T-cell (primary cell): ENCODE measurements at regions of chr20 and their contacts with region 1.

Region 1: DNA sequence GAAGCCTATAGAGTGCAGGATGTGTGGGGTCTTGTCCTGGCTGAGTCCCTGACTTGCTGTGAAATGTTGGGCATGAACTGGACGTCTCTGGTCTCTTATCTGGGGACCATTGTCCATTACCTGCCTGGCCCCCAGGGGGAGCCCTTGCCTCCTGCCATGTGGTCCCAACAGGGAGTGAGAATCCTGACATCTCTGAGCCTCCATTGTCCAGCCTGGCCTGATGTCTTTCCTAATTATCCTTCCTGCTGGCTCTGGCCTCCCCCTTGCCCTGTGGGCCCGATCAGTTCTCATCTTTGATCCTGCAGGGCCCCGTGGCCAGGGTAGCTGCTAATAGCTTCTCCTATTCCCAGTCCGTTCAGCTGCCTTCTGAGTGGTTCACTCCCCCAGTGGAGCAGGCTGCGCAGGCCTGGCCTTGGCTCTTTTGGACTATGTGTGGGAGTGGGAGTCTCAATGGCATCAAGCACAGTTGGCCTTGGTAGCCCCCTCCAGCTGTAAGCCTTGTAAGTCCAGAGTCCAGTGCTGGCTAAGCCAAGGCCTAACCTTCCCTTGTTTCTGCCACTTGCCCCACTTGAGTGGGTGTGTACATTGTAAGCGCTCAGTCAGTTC is 77.9 kb upstream of the RALY start:
- DNase-seq: peak in 33 of 35 experiments; percentile 2 to 69 (median 37)
- ATAC-seq: peak in 2 of 4 experiments; percentile 53 to 58
- H3K4me3 ChIP-seq: no peak overlapping the region
- H3K4me3 Mint-ChIP-seq: no peak overlapping the region
- H3K27ac ChIP-seq: no peak overlapping the region
- H3K27ac Mint-ChIP-seq: no peak overlapping the region
- H3K4me1 ChIP-seq: peaks cover 0 to 2% of the 10 kb centered on the region in 2 experiments
- H3K4me1 Mint-ChIP-seq: peaks cover 12 to 18% (median 14%) of the 10 kb centered on the region in 3 donors
- H3K27me3 ChIP-seq: peaks cover 0 to 6% of the 10 kb centered on the region in 2 experiments
- H3K27me3 Mint-ChIP-seq: peaks cover 0 to 5% of the 10 kb centered on the region in 2 donors

Region 2: DNA sequence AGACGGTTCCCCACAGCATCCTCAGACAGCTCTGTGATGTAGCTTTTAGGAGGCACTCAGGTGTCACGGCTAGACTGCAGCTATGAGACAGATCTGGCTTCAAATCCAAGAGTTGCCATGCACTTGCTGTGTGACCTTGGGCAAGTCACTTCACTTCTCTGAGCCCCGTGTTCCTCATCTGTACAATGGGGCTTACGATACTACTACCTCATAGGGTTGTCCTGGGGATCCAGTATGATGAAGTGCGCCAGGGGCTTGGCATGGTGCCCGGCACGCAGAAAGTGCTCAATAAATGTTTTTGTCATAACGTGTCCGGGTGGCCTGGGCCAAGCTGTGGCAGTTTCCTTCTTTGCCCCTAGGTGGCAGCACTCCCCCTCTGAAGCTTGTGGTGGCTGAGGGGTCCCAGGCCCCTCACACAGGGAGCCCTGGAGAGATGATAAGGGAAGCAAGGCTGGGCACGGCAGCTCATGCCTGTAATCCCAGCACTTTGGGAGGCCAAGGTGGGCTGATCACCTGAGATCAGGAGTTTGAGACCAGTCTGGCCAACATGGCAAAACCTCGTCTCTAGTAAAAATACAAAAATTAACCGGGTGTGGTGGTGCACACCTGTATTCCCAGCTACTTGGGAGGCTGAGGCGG is 123.8 kb before region 1 on chr20:
- CTCF ChIA-PET with region 1: interaction called, 4 to 10 read pairs
- POLR2A ChIA-PET with region 1: no interaction called
- DNase-seq: peak in 30 of 35 experiments; percentile 8 to 67 (median 34)
- ATAC-seq: peak in 3 of 4 experiments; percentile 60 to 69 (median 62)
- H3K4me3 ChIP-seq: no peak overlapping the region
- H3K4me3 Mint-ChIP-seq: no peak overlapping the region
- H3K27ac ChIP-seq: no peak overlapping the region
- H3K27ac Mint-ChIP-seq: no peak overlapping the region
- H3K4me1 ChIP-seq: peaks cover 2 to 13% of the 10 kb centered on the region in 2 experiments
- H3K4me1 Mint-ChIP-seq: peaks cover 6 to 14% (median 8%) of the 10 kb centered on the region in 3 donors
- H3K27me3 ChIP-seq: no peaks in the 10 kb centered on the region
- H3K27me3 Mint-ChIP-seq: no peaks in the 10 kb centered on the region

Region 3: GRCh38 chr20:33954504-33954903 is 38.7 kb after region 1 on chr20:
- CTCF ChIA-PET with region 1: interaction called in 1 of 2 experiments, 11 read pairs
- POLR2A ChIA-PET with region 1: no interaction called
- DNase-seq: no peak
- ATAC-seq: no peak
- H3K4me3 ChIP-seq: no peak overlapping the region
- H3K4me3 Mint-ChIP-seq: no peak overlapping the region
- H3K27ac ChIP-seq: no peak overlapping the region
- H3K27ac Mint-ChIP-seq: no peak overlapping the region
- H3K4me1 ChIP-seq: no peaks in the 10 kb centered on the region
- H3K4me1 Mint-ChIP-seq: no peaks in the 10 kb centered on the region
- H3K27me3 ChIP-seq: peaks cover 0 to 4% of the 10 kb centered on the region in 2 experiments
- H3K27me3 Mint-ChIP-seq: peaks cover 16 to 22% of the 10 kb centered on the region in 2 donors

Region 4: GRCh38 chr20:34111702-34112599 is 196.1 kb after region 1 on chr20 and contains the start of gene EIF2S2:
- CTCF ChIA-PET with region 1: interaction called in 1 of 2 experiments, 10 read pairs
- POLR2A ChIA-PET with region 1: no interaction called
- DNase-seq: peak; percentile 86 to 99 (median 95)
- ATAC-seq: peak; percentile 85 to 92 (median 90)
- H3K4me3 ChIP-seq: peak within 1 kb of the TSS; percentile 90 to 98
- H3K4me3 Mint-ChIP-seq: peak within 1 kb of the TSS; percentile 95 to 97 (median 96)
- H3K27ac ChIP-seq: peak within 1 kb of the TSS; percentile 87
- H3K27ac Mint-ChIP-seq: peak within 1 kb of the TSS; percentile 96 to 99
- H3K4me1 ChIP-seq: peaks cover 8 to 31% of the 10 kb centered on the region in 2 experiments
- H3K4me1 Mint-ChIP-seq: peaks cover 44 to 49% (median 48%) of the 10 kb centered on the region in 3 donors
- H3K27me3 ChIP-seq: no peaks in the 10 kb centered on the region
- H3K27me3 Mint-ChIP-seq: no peaks in the 10 kb centered on the region
- total RNA-seq, gene EIF2S2: 20.6 to 54.7 (median 48.9) TPM

Region 5: GRCh38 chr20:34129518-34130162 is 213.8 kb after region 1 on chr20:
- CTCF ChIA-PET with region 1: interaction called in 1 of 2 experiments, 16 read pairs
- POLR2A ChIA-PET with region 1: no interaction called
- DNase-seq: peak in 33 of 35 experiments; percentile 12 to 85 (median 34)
- ATAC-seq: peak; percentile 85 to 89 (median 86)
- H3K4me3 ChIP-seq: no peak overlapping the region
- H3K4me3 Mint-ChIP-seq: no peak overlapping the region
- H3K27ac ChIP-seq: no peak overlapping the region
- H3K27ac Mint-ChIP-seq: no peak overlapping the region
- H3K4me1 ChIP-seq: peaks cover 0 to 6% of the 10 kb centered on the region in 2 experiments
- H3K4me1 Mint-ChIP-seq: peaks cover 4 to 12% (median 7%) of the 10 kb centered on the region in 3 donors
- H3K27me3 ChIP-seq: peaks cover 0 to 4% of the 10 kb centered on the region in 2 experiments
- H3K27me3 Mint-ChIP-seq: peaks cover 0 to 7% of the 10 kb centered on the region in 2 donors